Activated T-helper 1 cell treated with anti-CD3 and anti-CD28 coated beads, Interleukin-12 subunit alpha, Interleukin-12 subunit beta, Interleukin-2, Interleukin-4 antibody, amounts not matched to agents 30 ng/mL and 10 ng/mL and 1 ng/mL, durations not matched to agents 14 hours and 24 hours and 36 hours (primary cell): ENCODE measurements at regions of chr20 and their contacts with region 1.

Region 1: GRCh38 chr20:44666066-44666465 is 14.6 kb upstream of the ADA start:
- DNase-seq: no peak
- H3K4me3 Mint-ChIP-seq: no peak overlapping the region
- H3K27ac Mint-ChIP-seq: no peak overlapping the region
- H3K4me1 Mint-ChIP-seq: peaks cover 10% of the 10 kb centered on the region
- H3K27me3 Mint-ChIP-seq: no peaks in the 10 kb centered on the region

Region 2: GRCh38 chr20:44460795-44461141 is 205.3 kb before region 1 on chr20:
- intact Hi-C with region 1: no loop called
- DNase-seq: no peak
- H3K4me3 Mint-ChIP-seq: no peak overlapping the region
- H3K27ac Mint-ChIP-seq: no peak overlapping the region
- H3K4me1 Mint-ChIP-seq: no peaks in the 10 kb centered on the region
- H3K27me3 Mint-ChIP-seq: peaks cover 2% of the 10 kb centered on the region

Region 3: GRCh38 chr20:44521484-44522481 is 144.3 kb before region 1 on chr20 and contains the start of gene SERINC3:
- intact Hi-C with region 1: no loop called
- DNase-seq: peak; percentile 96
- H3K4me3 Mint-ChIP-seq: peak within 1 kb of the TSS; percentile 88
- H3K27ac Mint-ChIP-seq: peak within 1 kb of the TSS; percentile 89
- H3K4me1 Mint-ChIP-seq: peaks cover 43% of the 10 kb centered on the region
- H3K27me3 Mint-ChIP-seq: no peaks in the 10 kb centered on the region
- total RNA-seq, gene SERINC3: 51.3 and 54.6 TPM in 2 replicates

Region 4: DNA sequence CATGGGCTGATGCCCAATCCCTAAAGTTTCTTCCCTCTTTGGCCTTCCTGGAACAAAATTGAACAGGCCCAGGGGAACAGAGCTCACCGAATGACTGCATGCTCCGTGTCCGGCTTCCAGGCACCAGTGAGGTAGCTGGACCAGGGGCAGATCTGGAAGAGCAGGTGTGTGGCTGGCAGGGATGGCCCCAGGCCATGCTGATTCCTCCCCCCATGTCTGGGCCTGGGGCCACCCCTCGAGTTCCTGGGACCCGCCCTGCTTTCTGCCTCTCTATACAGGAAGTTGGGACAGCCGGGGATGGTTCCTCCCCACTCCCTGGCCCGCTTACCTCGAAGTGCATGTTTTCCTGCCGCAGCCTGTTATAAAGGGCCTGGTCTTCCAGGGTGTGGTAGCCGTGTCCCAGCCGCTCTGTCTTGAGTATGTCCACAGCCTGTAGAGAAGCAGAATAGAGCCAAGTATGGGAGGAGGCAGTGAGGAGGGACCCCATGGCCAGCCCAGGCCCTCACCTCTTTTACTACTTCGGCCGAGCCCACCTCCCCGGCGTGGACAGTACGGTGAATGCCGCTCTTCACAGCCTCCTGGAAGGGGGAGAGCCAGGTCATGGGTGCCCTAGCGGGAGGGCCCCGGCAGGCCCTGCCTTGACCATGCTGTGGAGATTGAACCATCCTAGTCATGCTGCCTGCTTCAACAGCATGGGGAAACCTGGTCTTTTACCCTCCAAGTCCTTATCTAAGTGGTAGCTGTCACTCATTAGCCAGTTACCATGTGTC is 43.4 kb before region 1 on chr20:
- intact Hi-C with region 1: no loop called
- DNase-seq: no peak
- H3K4me3 Mint-ChIP-seq: no peak overlapping the region
- H3K27ac Mint-ChIP-seq: no peak overlapping the region
- H3K4me1 Mint-ChIP-seq: peaks cover 17% of the 10 kb centered on the region
- H3K27me3 Mint-ChIP-seq: no peaks in the 10 kb centered on the region

Region 5: GRCh38 chr20:44651684-44652423 is 14.2 kb before region 1 on chr20 and contains the start of gene ADA:
- intact Hi-C with region 1: loop called (anchors 1 kb)
- DNase-seq: peak; percentile 47
- H3K4me3 Mint-ChIP-seq: peak within 1 kb of the TSS; percentile 89
- H3K27ac Mint-ChIP-seq: peak within 1 kb of the TSS; percentile 94
- H3K4me1 Mint-ChIP-seq: peaks cover 58% of the 10 kb centered on the region
- H3K27me3 Mint-ChIP-seq: no peaks in the 10 kb centered on the region
- total RNA-seq, gene ADA: 45.1 and 45.5 TPM in 2 replicates

Region 6: GRCh38 chr20:46117704-46118467 is 1451.8 kb after region 1 on chr20 and contains the start of gene CD40:
- intact Hi-C with region 1: no loop called
- DNase-seq: peak; percentile 60
- H3K4me3 Mint-ChIP-seq: peak within 1 kb of the TSS; percentile 90
- H3K27ac Mint-ChIP-seq: no peak within 1 kb of the TSS
- H3K4me1 Mint-ChIP-seq: peaks cover 11% of the 10 kb centered on the region
- H3K27me3 Mint-ChIP-seq: peaks cover 10% of the 10 kb centered on the region
- total RNA-seq, gene CD40: 2.0 TPM in 2 replicates